ENCODE measurements at regions of chr5 and their contacts with region 1.

Region 1: DNA sequence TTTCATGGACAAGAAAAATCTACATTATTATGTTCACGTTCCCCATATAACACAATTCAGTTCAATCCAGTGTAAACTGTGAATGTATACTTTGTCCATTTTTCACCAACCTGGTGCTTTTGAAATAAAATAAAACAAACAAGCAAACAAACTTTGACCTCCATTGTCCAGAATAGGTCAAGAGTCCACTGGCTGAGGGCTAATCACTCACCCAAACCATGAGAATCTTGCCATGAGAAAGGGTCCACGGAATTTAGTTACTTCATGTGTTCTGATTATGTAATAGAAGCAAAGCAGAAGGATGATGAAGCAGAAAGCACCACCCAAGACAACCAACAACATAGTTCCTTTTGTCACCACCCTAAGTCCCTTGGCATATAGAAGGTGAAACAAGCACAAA is 28.7 kb downstream of the DIAPH1 start:
- DNase-seq: no peak
- ATAC-seq: no peak
- H3K4me3 ChIP-seq: no peak overlapping the region
- H3K27ac ChIP-seq: no peak overlapping the region
- H3K4me1 ChIP-seq: 0 out of 2 replicates have a peak, but pooled peaks cover 3% of the 10 kb centered on the region
- H3K27me3 ChIP-seq: no peaks in the 10 kb centered on the region
- CTCF ChIP-seq: no peak

Region 2: DNA sequence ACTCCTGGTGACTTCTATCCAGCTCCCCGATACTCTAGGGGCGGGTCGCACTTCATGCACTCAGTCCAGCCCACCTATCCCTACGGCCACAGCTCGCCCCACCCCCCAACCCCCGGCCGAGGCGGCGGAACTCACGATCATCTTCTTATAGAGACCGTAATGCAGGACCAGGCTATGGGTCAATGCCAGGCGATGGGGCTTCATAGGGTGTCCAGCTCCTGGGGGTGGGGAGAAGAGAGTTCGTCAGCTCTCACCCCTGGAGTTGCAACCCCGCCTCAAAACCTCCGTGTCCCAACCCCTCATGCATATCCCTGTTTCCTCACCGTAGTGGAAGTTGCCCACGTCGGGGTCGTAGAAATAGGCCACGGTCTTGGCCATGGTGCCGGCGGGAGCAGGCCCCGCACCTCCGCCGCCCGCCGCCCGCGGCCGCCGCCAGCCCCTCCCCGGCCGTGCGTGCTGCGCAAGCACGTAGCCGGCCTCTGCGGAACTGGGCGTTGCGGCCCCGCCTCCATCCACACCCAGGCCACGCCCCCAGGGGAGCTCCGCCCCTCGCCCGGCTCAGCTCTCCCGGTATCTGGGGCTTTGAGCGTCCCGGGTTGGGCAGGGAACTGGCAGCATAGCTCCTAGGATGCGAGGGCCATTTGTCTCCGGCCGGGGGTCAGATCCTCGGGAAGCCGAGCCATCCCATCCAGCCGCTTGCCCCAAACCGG is 46.4 kb after region 1 on chr5 and contains the starts of genes HDAC3 and RELL2:
- CTCF ChIA-PET with region 1: interaction called, 16 read pairs
- POLR2A ChIA-PET with region 1: no interaction called
- intact Hi-C with region 1: no loop called
- DNase-seq: peak; percentile 89
- ATAC-seq: peak; percentile 87
- H3K4me3 ChIP-seq: peak within 1 kb of the TSS; percentile 98
- H3K27ac ChIP-seq: peak within 1 kb of the TSS; percentile 26; the same call in 1 of the 2 replicates
- H3K4me1 ChIP-seq: peaks cover 34% of the 10 kb centered on the region
- H3K27me3 ChIP-seq: no peaks in the 10 kb centered on the region
- CTCF ChIP-seq: no peak
- total RNA-seq, gene HDAC3: 66.8 and 82.9 TPM in 2 replicates
- total RNA-seq, gene RELL2: 4.1 and 5.6 TPM in 2 replicates

Region 3: DNA sequence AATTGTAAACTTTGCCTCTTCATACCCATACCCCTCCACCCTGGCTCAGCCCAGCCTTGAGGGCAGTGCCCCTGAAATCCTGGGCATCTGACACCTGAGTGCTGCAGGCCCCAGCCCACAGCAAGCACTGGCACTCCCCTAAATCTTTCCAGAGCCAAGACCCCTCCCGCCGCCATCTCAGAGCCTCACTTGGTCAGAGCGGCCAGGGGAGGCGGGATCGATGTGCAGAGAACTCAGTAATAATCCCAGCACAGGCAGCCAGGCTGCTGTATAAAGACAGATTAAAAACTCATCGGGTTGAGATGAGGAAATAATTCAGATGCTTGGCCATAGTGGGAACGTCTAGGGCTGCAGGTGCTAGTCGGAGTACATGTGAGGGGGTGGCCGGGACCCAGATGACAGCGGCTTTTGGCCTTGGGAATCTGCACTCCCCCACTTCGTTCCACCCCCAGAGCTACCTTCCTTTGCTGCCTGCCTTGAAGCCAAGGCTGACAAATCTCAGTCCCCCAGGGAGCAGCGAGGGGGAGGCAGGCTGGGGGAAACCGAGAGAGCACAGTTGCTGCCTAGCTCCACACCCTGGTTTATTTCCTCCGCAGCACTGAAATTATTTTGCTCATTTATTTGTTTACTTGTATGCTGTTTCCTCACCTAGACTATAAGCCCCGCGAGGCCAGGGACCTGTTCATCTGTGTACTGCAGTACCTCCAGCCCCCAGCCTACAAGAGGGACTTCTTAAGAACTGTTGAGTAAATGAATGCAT is 111.4 kb after region 1 on chr5:
- CTCF ChIA-PET with region 1: no interaction called
- POLR2A ChIA-PET with region 1: no interaction called
- intact Hi-C with region 1: no loop called
- DNase-seq: no peak
- ATAC-seq: no peak
- H3K4me3 ChIP-seq: peak overlapping the region; percentile 81; the same call in 1 of the 2 replicates
- H3K27ac ChIP-seq: no peak overlapping the region
- H3K4me1 ChIP-seq: peaks cover 18% of the 10 kb centered on the region
- H3K27me3 ChIP-seq: no peaks in the 10 kb centered on the region
- CTCF ChIP-seq: no peak